Activated B cell treated with CpG ODN at 0.5 μM for 24 hours (primary cell): ENCODE measurements at regions of chr14 and their contacts with region 1.

Region 1: GRCh38 chr14:30656190-30656632 is 34.1 kb downstream of the SCFD1 start:
- DNase-seq: no peak
- ATAC-seq: peak; percentile 64
- H3K4me3 Mint-ChIP-seq: no peak overlapping the region
- H3K27ac Mint-ChIP-seq: no peak overlapping the region
- H3K4me1 Mint-ChIP-seq: no peaks in the 10 kb centered on the region
- H3K27me3 Mint-ChIP-seq: no peaks in the 10 kb centered on the region
- CTCF ChIP-seq: peak; percentile 71

Region 2: GRCh38 chr14:30573226-30573814 is 82.9 kb before region 1 on chr14:
- CTCF ChIA-PET with region 1: no interaction called
- POLR2A ChIA-PET with region 1: no interaction called
- intact Hi-C with region 1: no loop called
- DNase-seq: no peak
- ATAC-seq: no peak
- H3K4me3 Mint-ChIP-seq: no peak overlapping the region
- H3K27ac Mint-ChIP-seq: no peak overlapping the region
- H3K4me1 Mint-ChIP-seq: peaks cover 77% of the 10 kb centered on the region
- H3K27me3 Mint-ChIP-seq: no peaks in the 10 kb centered on the region
- CTCF ChIP-seq: no peak

Region 3: GRCh38 chr14:30645600-30645999 is 10.6 kb before region 1 on chr14:
- CTCF ChIA-PET with region 1: no interaction called
- POLR2A ChIA-PET with region 1: no interaction called
- intact Hi-C with region 1: no loop called
- DNase-seq: no peak
- ATAC-seq: no peak
- H3K4me3 Mint-ChIP-seq: no peak overlapping the region
- H3K27ac Mint-ChIP-seq: no peak overlapping the region
- H3K4me1 Mint-ChIP-seq: peaks cover 3% of the 10 kb centered on the region
- H3K27me3 Mint-ChIP-seq: no peaks in the 10 kb centered on the region
- CTCF ChIP-seq: no peak

Region 4: DNA sequence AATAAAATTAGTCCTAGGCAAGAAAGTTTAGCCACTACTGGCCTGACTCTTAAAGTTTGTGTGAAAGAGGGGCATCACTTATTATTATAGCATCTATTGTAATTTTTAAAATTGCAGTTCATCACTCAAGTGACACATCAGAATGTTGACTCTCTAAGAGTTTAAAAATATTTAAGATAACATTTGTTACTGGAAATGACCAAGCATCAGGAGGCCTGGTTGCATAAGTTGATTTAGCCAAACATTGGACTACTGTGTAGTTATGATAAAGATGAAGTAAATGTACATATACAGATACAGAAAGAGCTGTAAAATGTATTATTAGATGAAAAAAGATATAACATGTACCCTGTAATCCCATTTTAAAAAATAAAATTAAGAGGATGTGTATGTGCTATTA is 13.4 kb after region 1 on chr14:
- CTCF ChIA-PET with region 1: interaction called, 3 read pairs
- POLR2A ChIA-PET with region 1: no interaction called
- intact Hi-C with region 1: loop called (anchors 2 kb)
- DNase-seq: no peak
- ATAC-seq: no peak
- H3K4me3 Mint-ChIP-seq: no peak overlapping the region
- H3K27ac Mint-ChIP-seq: no peak overlapping the region
- H3K4me1 Mint-ChIP-seq: no peaks in the 10 kb centered on the region
- H3K27me3 Mint-ChIP-seq: no peaks in the 10 kb centered on the region
- CTCF ChIP-seq: no peak

Region 5: GRCh38 chr14:30906752-30907658 is 250.8 kb after region 1 on chr14:
- CTCF ChIA-PET with region 1: interaction called, 10 read pairs
- POLR2A ChIA-PET with region 1: no interaction called
- intact Hi-C with region 1: loop called (anchors 1 kb)
- DNase-seq: no peak
- ATAC-seq: peak; percentile 28
- H3K4me3 Mint-ChIP-seq: no peak overlapping the region
- H3K27ac Mint-ChIP-seq: no peak overlapping the region
- H3K4me1 Mint-ChIP-seq: no peaks in the 10 kb centered on the region
- H3K27me3 Mint-ChIP-seq: no peaks in the 10 kb centered on the region
- CTCF ChIP-seq: no peak

Region 6: GRCh38 chr14:32560209-32560857 is 1904.1 kb after region 1 on chr14:
- CTCF ChIA-PET with region 1: no interaction called
- POLR2A ChIA-PET with region 1: no interaction called
- intact Hi-C with region 1: loop called (anchors 5 kb)
- DNase-seq: no peak
- ATAC-seq: no peak
- H3K4me3 Mint-ChIP-seq: no peak overlapping the region
- H3K27ac Mint-ChIP-seq: no peak overlapping the region
- H3K4me1 Mint-ChIP-seq: no peaks in the 10 kb centered on the region
- H3K27me3 Mint-ChIP-seq: no peaks in the 10 kb centered on the region
- CTCF ChIP-seq: no peak